ENCODE measurements at regions of chr14 and their contacts with region 1.

Region 1: GRCh38 chr14:35826218-35826951 is at the start of gene BRMS1L:
- DNase-seq: peak; percentile 97
- H3K4me3 ChIP-seq: peak within 1 kb of the TSS; percentile 88 to 94
- H3K27ac ChIP-seq: peak within 1 kb of the TSS; percentile 95 to 99
- H3K4me1 ChIP-seq: peaks cover 0 to 5% of the 10 kb centered on the region in 2 experiments; a peak in 2 of 4 replicates
- H3K27me3 ChIP-seq: no peaks in the 10 kb centered on the region
- CTCF ChIP-seq: no peak
- EP300 ChIP-seq: 0 out of 4 replicates have a peak, but pooled peaks of 1 of the 2 experiments have one; percentile 9
- RAD21 ChIP-seq: no peak
- polyA plus RNA-seq, gene BRMS1L: 7.1 and 9.1 TPM in 2 replicates

Region 2: GRCh38 chr14:35806006-35806907 is 20.1 kb before region 1 on chr14:
- CTCF ChIA-PET with region 1: interaction called, 6 read pairs
- POLR2A ChIA-PET with region 1: interaction called, 11 read pairs
- DNase-seq: no peak
- H3K4me3 ChIP-seq: no peak overlapping the region
- H3K27ac ChIP-seq: no peak overlapping the region
- H3K4me1 ChIP-seq: peaks cover 2 to 10% of the 10 kb centered on the region in 2 experiments; a peak in 2 of 4 replicates
- H3K27me3 ChIP-seq: no peaks in the 10 kb centered on the region
- CTCF ChIP-seq: no peak
- EP300 ChIP-seq: no peak
- RAD21 ChIP-seq: no peak

Region 3: GRCh38 chr14:35814371-35815005 is 11.9 kb before region 1 on chr14:
- CTCF ChIA-PET with region 1: interaction called, 10 read pairs
- POLR2A ChIA-PET with region 1: interaction called, 11 read pairs
- DNase-seq: peak; percentile 51
- H3K4me3 ChIP-seq: peak overlapping the region in 1 of 2 experiments; percentile 19; a peak in 1 of 4 replicates
- H3K27ac ChIP-seq: no peak overlapping the region
- H3K4me1 ChIP-seq: no peaks in the 10 kb centered on the region
- H3K27me3 ChIP-seq: no peaks in the 10 kb centered on the region
- CTCF ChIP-seq: peak; percentile 76
- EP300 ChIP-seq: no peak
- RAD21 ChIP-seq: peak; percentile 59